Dendritic cell treated with granulocyte-macrophage colony-stimulating factor and Interleukin-4, amounts not matched to agents 40 ng/mL and 50 ng/mL, for 4 days (primary cell): ENCODE measurements at regions of chr15 and their contacts with region 1.

Region 1: GRCh38 chr15:92714477-92715401 is 59.2 kb upstream of the FAM174B start:
- H3K4me3 Mint-ChIP-seq: peak overlapping the region; percentile 79
- H3K27ac Mint-ChIP-seq: peak overlapping the region; percentile 30
- H3K4me1 Mint-ChIP-seq: peaks cover 8% of the 10 kb centered on the region
- H3K27me3 Mint-ChIP-seq: peaks cover 17% of the 10 kb centered on the region

Region 2: GRCh38 chr15:92097474-92098178 is 617.1 kb before region 1 on chr15:
- intact Hi-C with region 1: loop called (anchors 5 kb)
- H3K4me3 Mint-ChIP-seq: no peak overlapping the region
- H3K27ac Mint-ChIP-seq: peak overlapping the region; percentile 1
- H3K4me1 Mint-ChIP-seq: peaks cover 62% of the 10 kb centered on the region
- H3K27me3 Mint-ChIP-seq: no peaks in the 10 kb centered on the region

Region 3: DNA sequence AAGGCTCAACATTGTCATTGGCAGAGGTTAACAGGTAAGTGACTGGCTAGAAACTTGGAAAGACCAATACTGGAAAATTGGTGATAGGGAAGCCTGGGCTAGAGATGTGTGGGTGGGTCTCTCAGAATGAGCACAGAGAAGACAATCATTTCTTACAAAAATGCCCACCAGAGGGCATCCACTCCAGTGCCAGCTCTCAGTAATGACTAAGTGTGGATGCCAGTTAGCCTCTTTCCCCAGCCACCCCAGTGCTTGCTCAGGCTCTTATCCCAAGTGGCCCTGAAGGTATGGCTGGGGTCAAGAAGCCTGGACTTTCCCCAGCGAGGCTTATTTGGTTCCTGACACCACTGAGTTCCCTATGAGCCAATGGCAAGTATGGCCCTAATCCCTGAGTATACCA is 437.0 kb before region 1 on chr15:
- intact Hi-C with region 1: loop called (anchors 2 kb)
- H3K4me3 Mint-ChIP-seq: no peak overlapping the region
- H3K27ac Mint-ChIP-seq: no peak overlapping the region
- H3K4me1 Mint-ChIP-seq: no peaks in the 10 kb centered on the region
- H3K27me3 Mint-ChIP-seq: no peaks in the 10 kb centered on the region

Region 4: DNA sequence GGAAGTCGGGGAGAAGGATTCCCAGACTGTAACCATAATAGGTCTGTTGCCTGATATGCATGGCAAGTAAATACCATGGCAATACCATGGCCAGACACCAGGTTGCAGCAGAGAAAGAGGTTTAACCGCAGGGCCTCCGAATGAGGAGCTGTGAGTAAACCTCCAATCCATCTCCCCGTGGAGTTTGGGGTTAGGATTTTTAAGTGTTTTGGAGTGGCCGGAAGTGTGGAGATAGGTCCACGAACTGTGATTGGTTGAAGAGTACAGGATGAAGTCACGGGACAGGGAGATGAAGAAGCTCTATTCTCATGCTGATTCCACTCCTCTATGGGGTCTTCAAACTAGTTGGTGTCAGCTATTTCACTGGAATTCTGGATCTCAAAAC is 193.1 kb before region 1 on chr15:
- intact Hi-C with region 1: loop called (anchors 1 kb)
- H3K4me3 Mint-ChIP-seq: no peak overlapping the region
- H3K27ac Mint-ChIP-seq: no peak overlapping the region
- H3K4me1 Mint-ChIP-seq: peaks cover 5% of the 10 kb centered on the region
- H3K27me3 Mint-ChIP-seq: no peaks in the 10 kb centered on the region

Region 5: DNA sequence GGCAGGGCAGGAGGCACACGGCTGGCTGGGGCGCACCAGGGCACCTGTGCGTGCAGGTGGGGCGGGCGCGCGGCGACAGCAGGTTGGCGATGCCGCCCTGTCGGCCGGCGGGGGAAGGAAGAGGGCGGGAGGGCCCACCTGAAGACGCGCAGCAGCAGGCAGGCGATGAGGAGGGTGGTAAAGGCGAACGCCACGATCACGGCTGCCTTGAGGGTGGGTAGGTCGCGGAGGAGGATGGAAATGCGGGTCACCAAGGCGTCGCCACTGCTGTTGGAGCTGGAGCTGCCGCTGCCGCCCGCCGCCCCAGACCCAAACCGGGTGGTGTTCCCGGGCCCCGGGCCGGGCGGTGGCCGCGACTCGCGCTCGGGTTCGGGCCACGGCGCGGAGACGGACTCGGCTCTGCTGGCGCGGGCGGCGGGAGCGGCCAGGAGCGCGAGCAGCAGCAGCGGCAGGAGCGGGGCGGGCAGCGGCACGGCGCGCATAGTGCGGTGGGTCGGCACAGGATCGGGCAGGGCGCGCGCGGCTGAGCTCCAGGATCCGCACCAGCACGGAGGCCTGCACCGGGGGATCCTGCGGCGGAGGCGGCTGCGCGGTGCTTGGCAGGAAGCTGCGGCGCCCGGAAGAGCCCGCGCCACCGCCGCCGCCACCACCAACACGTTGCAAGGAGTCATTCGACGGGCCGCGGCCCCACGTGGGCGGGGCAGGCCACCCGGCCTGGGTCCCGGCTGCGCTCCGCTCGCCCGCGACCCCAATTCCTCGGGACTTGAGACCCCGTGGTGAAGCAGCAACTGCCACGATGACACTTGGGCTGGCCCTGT is 59.4 kb before region 1 on chr15 and contains the start of gene FAM174B:
- intact Hi-C with region 1: loop called (anchors 10 kb)
- H3K4me3 Mint-ChIP-seq: peak within 1 kb of the TSS; percentile 67
- H3K27ac Mint-ChIP-seq: no peak within 1 kb of the TSS
- H3K4me1 Mint-ChIP-seq: peaks cover 16% of the 10 kb centered on the region
- H3K27me3 Mint-ChIP-seq: peaks cover 48% of the 10 kb centered on the region